GM18951 (cell line): ENCODE measurements at regions of chr10 and their contacts with region 1.

Region 1: GRCh38 chr10:114304017-114304570 is 65.0 kb downstream of the VWA2 start:
- POLR2A ChIP-seq: no peak

Region 2: DNA sequence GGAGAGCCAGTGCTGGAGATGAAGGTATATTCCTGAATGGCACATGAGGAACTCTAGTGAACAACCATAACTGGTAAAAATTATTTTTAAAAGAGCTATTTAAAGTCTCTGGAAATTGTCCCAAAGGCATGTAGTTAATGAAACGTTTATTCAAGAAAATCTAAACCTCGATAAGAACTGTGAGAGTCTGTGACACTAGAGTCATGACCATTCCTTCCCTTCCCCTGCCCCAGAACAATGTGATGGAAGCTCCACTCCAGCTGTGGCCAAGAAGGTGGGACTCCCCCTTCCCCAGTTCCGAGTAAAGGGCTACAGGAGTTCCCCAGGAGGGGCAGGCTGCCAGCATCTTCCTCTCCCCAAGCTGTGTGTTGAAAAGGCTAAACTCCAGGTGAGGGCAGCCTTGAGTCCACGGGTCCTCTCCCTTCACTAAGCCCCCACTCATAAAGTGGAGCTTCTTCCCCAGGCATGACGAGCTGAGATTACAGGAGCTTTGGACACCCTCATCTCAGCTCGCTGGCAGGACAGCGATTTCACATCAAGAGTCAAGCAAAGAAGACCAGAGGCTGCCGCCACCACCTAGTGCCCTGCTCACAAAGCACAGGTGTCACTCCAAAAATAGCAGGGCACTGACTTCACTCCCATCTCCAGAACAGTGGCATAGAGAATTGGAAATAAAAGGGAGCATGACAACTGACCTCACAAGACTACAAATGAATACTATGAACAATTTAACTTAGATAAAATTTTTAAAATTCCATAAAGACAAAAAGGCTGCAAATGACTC is 381.1 kb before region 1 on chr10:
- in situ Hi-C with region 1: no loop called
- POLR2A ChIP-seq: no peak

Region 3: GRCh38 chr10:115129752-115130151 is 825.7 kb after region 1 on chr10:
- in situ Hi-C with region 1: loop called (anchors 25 kb)
- POLR2A ChIP-seq: no peak